CD8-positive, alpha-beta T cell (primary cell): ENCODE measurements at regions of chr18 and their contacts with region 1.

Region 1: GRCh38 chr18:21230436-21230835 is 11.6 kb upstream of the GREB1L start:
- DNase-seq: no peak
- ATAC-seq: no peak
- H3K4me3 ChIP-seq: no peak overlapping the region
- H3K4me3 Mint-ChIP-seq: no peak overlapping the region
- H3K27ac ChIP-seq: no peak overlapping the region
- H3K27ac Mint-ChIP-seq: no peak overlapping the region
- H3K4me1 ChIP-seq: no peaks in the 10 kb centered on the region
- H3K4me1 Mint-ChIP-seq: no peaks in the 10 kb centered on the region
- H3K27me3 ChIP-seq: no peaks in the 10 kb centered on the region
- H3K27me3 Mint-ChIP-seq: peaks cover 9% of the 10 kb centered on the region
- CTCF ChIP-seq: no peak

Region 2: DNA sequence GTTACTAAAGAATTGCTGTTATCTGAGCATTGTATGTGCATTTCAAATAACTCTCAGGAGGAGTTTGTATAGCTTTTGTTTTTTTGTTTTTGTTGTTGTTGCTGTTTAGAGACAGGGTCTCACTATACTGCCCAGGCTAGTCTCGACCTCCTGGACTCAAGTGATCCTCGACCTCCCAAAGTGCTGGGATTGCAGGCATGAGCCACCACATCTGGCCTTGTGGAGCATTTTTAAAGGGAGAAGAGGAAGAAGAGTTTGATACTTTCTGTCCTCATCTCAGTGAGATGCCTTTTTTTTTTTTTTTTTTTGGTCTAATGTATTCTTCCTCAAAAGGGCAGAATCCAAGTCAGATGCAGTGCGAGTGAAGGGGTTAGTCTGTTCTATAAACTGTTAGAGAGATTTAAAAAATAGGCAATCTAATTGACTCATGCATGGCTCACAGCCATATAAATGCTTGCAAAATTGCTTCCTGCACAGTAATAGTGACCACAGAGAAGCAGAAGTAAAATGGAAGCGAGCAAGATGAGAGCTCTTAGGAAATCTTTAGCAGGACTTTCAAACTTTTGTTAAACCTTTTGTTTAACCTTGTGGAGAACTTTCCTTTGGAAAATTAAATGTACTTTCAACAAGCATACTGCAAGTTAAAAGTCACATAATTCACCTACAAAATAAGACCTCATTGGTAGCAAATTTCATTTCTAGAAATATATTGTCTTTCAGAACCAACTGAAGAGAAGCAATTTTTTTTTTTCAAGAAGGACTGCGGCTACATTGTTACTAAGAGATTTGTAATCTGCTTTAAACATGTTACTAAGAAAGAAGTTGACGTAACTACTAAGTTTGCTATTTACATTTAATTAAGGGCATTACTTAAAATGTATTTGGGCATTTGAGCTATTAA is 66.5 kb before region 1 on chr18:
- CTCF ChIA-PET with region 1: no interaction called
- POLR2A ChIA-PET with region 1: no interaction called
- intact Hi-C with region 1: loop called in 1 of 2 experiments (anchors 10 kb)
- DNase-seq: peak in 1 of 9 experiments; percentile 22
- ATAC-seq: no peak
- H3K4me3 ChIP-seq: no peak overlapping the region
- H3K4me3 Mint-ChIP-seq: no peak overlapping the region
- H3K27ac ChIP-seq: no peak overlapping the region
- H3K27ac Mint-ChIP-seq: no peak overlapping the region
- H3K4me1 ChIP-seq: no peaks in the 10 kb centered on the region
- H3K4me1 Mint-ChIP-seq: no peaks in the 10 kb centered on the region
- H3K27me3 ChIP-seq: no peaks in the 10 kb centered on the region
- H3K27me3 Mint-ChIP-seq: peaks cover 4% of the 10 kb centered on the region
- CTCF ChIP-seq: no peak

Region 3: GRCh38 chr18:21777814-21778213 is 547.4 kb after region 1 on chr18:
- CTCF ChIA-PET with region 1: no interaction called
- POLR2A ChIA-PET with region 1: no interaction called
- intact Hi-C with region 1: no loop called
- DNase-seq: no peak
- ATAC-seq: no peak
- H3K4me3 ChIP-seq: no peak overlapping the region
- H3K4me3 Mint-ChIP-seq: no peak overlapping the region
- H3K27ac ChIP-seq: no peak overlapping the region
- H3K27ac Mint-ChIP-seq: no peak overlapping the region
- H3K4me1 ChIP-seq: no peaks in the 10 kb centered on the region
- H3K4me1 Mint-ChIP-seq: no peaks in the 10 kb centered on the region
- H3K27me3 ChIP-seq: no peaks in the 10 kb centered on the region
- H3K27me3 Mint-ChIP-seq: no peaks in the 10 kb centered on the region
- CTCF ChIP-seq: no peak